Heart right ventricle (tissue), 16 donors: ENCODE measurements at regions of chr14 and their contacts with region 1.

Region 1: DNA sequence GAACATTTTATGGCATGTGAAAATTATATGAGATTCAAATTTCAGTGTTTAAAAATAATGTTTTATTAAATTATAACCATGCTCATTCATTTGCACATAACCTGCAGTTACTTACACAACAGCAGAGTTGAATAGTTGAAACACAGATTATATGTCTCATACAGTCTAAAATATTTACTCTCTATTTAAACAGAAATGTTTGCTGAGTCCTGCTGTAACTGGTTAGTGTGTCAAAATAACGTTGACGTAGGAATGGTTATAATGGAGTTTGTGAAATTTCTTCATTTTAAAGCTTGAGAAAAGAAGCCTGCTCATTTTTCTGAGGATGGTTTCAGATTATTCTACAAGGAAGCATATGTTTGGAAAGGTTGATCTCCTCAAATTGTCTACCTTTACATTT is 196.4 kb upstream of the GARIN2 start:
- DNase-seq: no peak
- ATAC-seq: no peak
- H3K4me3 ChIP-seq: no peak overlapping the region
- H3K27ac ChIP-seq: no peak overlapping the region
- H3K4me1 ChIP-seq: no peaks in the 10 kb centered on the region
- H3K27me3 ChIP-seq: no peaks in the 10 kb centered on the region
- CTCF ChIP-seq: no peak

Region 2: GRCh38 chr14:66403183-66403582 is 589.6 kb before region 1 on chr14:
- intact Hi-C with region 1: no loop called
- DNase-seq: no peak
- ATAC-seq: peak in 6 of 8 donors; percentile 20 to 69 (median 60)
- H3K4me3 ChIP-seq: no peak overlapping the region
- H3K27ac ChIP-seq: no peak overlapping the region
- H3K4me1 ChIP-seq: peaks cover 0 to 14% (median 5%) of the 10 kb centered on the region in 9 donors
- H3K27me3 ChIP-seq: no peaks in the 10 kb centered on the region
- CTCF ChIP-seq: peak in 7 of 9 donors; percentile 33 to 60 (median 45)

Region 3: DNA sequence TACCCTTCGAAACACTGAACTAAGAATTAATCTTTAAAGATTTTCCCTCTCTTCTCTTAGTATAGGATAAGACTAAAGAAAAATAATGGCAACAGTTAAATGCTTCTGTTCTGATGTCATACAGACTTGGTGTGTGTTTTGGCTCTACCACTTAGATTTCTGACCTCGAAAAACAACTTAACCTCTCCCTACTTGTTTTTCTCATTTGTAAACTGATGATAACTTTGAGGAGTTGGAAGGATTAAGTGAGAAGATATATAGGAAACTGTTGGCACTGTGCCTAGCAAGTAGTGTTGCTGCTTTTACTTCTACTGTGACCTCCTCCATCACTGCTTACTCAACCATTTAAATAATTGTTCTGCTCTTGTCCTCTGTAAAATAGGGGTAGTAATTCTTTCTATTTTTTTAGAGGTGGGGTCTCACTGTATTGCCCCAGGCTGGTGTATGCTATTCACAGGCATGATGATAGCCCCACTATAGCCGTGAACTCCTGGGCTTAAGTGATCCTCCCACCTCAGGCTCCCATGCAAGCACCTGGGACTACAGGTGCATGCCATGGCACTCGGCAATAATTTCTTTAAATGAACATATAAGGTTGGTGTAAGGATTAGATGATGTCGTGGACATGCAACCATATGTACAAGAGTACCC is 270.8 kb after region 1 on chr14:
- intact Hi-C with region 1: loop called in 1 of 10 experiments (anchors 5 kb)
- DNase-seq: no peak
- ATAC-seq: no peak
- H3K4me3 ChIP-seq: no peak overlapping the region
- H3K27ac ChIP-seq: no peak overlapping the region
- H3K4me1 ChIP-seq: peaks cover 0 to 47% (median 25%) of the 10 kb centered on the region in 9 donors
- H3K27me3 ChIP-seq: no peaks in the 10 kb centered on the region
- CTCF ChIP-seq: no peak